ENCODE measurements at regions of chr1 and their contacts with region 1.

Region 1: GRCh38 chr1:197915862-197916499 is 1.2 kb upstream of the LHX9 start:
- DNase-seq: peak; percentile 88
- H3K27ac ChIP-seq: no peak overlapping the region
- CTCF ChIP-seq: peak; percentile 85

Region 2: DNA sequence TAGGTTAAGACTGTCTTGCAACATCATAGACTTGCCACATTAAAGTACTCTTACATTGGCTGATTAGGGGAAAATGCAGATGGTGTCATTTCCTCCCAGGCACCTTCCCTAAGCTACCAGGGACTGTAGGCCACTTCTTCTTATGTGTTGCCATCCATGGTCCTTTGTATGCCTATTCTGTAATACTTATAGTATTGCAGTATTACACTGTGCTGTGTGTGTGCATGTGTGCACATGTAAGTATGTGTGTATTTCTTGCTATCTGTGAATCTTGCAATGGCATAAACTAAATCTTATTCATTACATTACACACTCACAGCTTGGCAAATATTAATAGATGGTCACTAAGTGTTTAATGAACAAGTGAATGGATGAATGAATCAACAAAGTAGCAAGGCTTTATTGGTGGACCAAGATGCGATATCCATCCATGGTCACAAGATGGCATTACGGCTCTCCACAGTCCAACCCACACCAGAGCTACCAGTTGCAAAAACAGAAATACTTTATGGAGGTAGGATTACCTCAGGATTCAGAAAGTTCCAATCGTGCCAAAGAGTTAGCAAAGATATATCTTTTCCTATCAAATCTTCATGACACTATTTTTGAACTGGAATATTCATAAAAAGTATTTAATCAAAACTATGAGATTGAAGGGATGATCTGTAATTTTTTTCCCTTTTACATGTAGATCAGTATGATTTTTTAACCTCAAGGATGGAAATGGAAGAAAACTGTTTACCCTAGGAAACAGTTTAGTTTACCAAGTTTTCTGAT is 300.9 kb before region 1 on chr1:
- CTCF ChIA-PET with region 1: interaction called, 10 read pairs
- POLR2A ChIA-PET with region 1: no interaction called
- DNase-seq: peak; percentile 31
- H3K27ac ChIP-seq: no peak overlapping the region
- CTCF ChIP-seq: peak; percentile 73

Region 3: GRCh38 chr1:197902454-197903195 is 13.4 kb before region 1 on chr1 and contains the start of gene C1orf53:
- CTCF ChIA-PET with region 1: interaction called, 19 read pairs
- POLR2A ChIA-PET with region 1: interaction called, 6 read pairs
- DNase-seq: peak; percentile 98
- H3K27ac ChIP-seq: peak within 1 kb of the TSS; percentile 91
- CTCF ChIP-seq: no peak

Measured in RWPE1 (cell line).